Activated CD8-positive, alpha-beta memory T cell treated with anti-CD3 and anti-CD28 coated beads, Interleukin-2, amount 10 ng/mL, durations not matched to agents 7 days and 5 days (primary cell): ENCODE measurements at regions of chr3 and their contacts with region 1.

Region 1: GRCh38 chr3:136861890-136862616 is at the start of gene NCK1:
- DNase-seq: peak; percentile 99
- ATAC-seq: peak; percentile 98
- H3K4me3 Mint-ChIP-seq: peak within 1 kb of the TSS; percentile 97
- H3K27ac Mint-ChIP-seq: peak within 1 kb of the TSS; percentile 90
- H3K4me1 Mint-ChIP-seq: peaks cover 45% of the 10 kb centered on the region
- H3K27me3 Mint-ChIP-seq: no peaks in the 10 kb centered on the region
- total RNA-seq, gene NCK1: 37.1 to 37.4 TPM

Region 2: GRCh38 chr3:136919799-136920580 is 57.9 kb after region 1 on chr3:
- CTCF ChIA-PET with region 1: interaction called, 12 read pairs
- DNase-seq: no peak
- ATAC-seq: peak; percentile 80
- H3K4me3 Mint-ChIP-seq: peak overlapping the region; percentile 50
- H3K27ac Mint-ChIP-seq: peak overlapping the region; percentile 90
- H3K4me1 Mint-ChIP-seq: peaks cover 67% of the 10 kb centered on the region
- H3K27me3 Mint-ChIP-seq: no peaks in the 10 kb centered on the region